Dendritic cell treated with granulocyte-macrophage colony-stimulating factor and Interleukin-4, amounts not matched to agents 40 ng/mL and 50 ng/mL, for 4 days (primary cell): ENCODE measurements at regions of chr2 and their contacts with region 1.

Region 1: DNA sequence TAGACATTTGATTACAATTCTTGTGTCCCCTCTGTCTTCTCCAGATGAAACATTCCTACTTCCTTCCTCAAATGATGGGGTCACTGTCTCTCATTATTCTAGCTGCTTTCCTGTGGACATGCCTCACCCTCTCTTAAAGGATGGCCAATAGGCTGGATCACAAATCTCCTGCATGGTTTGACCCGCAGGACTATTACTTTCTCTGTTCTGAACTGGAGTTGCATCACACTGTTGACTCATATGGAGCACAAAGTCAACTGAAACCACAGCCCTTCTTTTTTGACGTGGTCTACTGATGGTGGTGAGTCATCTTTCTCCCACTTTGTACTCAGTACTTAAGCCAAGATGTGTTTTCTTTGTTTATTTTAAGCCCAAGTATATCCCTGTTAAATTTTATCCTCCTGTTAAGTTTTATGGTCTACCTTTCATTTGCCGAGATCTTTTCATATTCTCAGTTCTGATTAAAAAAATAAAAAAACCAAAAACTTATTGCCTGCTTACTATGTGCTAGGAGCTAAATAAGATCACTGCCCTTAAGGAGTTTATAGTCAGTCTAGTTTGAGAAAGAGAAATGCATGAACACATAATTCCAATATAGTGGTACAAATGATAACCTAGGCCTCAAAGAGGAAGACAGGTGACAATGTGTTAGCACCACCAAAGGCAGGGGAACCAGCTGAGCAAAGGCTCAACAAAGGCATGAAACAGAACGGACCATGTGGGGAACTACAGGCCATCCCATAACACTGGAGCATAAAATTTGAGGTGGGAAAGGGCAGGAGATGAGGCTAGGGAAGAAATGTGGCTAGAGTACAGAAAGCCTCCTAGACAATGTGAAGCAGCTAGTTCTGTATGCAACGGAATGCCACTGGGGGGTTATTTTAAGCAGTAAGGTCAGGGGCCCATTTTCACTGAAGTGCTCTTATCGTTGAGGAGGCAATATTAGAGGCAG is 67.6 kb upstream of the ZFP36L2 start:
- H3K4me3 Mint-ChIP-seq: peak overlapping the region; percentile 21
- H3K27ac Mint-ChIP-seq: peak overlapping the region; percentile 73
- H3K4me1 Mint-ChIP-seq: peaks cover 32% of the 10 kb centered on the region
- H3K27me3 Mint-ChIP-seq: peaks cover 3% of the 10 kb centered on the region

Region 2: GRCh38 chr2:43269706-43270105 is 24.3 kb before region 1 on chr2:
- intact Hi-C with region 1: loop called (anchors 2 kb)
- H3K4me3 Mint-ChIP-seq: peak overlapping the region; percentile 46
- H3K27ac Mint-ChIP-seq: peak overlapping the region; percentile 89
- H3K4me1 Mint-ChIP-seq: peaks cover 84% of the 10 kb centered on the region
- H3K27me3 Mint-ChIP-seq: no peaks in the 10 kb centered on the region

Region 3: DNA sequence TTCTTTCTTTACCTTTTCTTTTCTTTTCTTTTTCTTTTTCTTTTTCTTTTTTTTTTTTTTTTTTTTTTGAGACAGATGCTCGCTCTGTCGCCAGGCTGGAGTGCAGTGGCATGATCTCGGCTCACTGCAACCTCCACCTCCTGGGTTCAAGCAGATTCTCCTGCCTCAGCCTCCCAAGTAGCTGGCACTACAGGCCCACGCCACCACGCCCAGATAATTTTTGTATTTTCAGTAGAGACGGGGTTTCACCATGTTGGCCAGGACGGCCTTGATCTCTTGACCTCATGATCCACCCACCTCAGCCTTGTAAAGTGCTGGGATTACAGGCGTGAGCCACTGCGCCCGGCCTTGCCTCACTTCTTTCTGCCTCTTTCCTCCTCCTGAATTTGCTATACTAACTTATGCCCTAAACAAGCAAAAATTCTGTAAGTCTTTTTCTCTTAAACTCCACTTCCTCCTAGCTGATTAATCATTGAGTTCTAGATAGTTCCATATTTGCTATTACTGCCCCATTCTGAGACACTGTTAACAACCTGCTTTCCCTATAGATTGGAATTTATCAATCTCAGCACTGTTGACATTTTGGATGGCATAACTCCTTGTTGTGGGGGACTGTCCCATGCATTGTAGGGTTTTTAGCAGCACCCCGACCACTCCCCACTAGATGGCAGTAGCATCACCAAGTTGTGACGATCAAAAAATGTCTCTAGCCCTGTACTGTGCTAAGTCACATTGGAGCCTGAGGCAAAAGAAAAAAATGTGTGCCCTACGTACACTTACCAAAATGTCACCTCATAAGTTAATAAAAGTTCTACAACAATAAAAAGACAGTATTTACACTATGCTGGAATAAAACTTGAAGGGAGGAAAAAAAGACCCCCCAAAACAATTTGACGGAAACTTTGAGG is 318.2 kb after region 1 on chr2:
- intact Hi-C with region 1: no loop called
- H3K4me3 Mint-ChIP-seq: no peak overlapping the region
- H3K27ac Mint-ChIP-seq: no peak overlapping the region
- H3K4me1 Mint-ChIP-seq: peaks cover 7% of the 10 kb centered on the region
- H3K27me3 Mint-ChIP-seq: peaks cover 3% of the 10 kb centered on the region